Heart right ventricle (tissue), 16 donors: ENCODE measurements at regions of chr19 and their contacts with region 1.

Region 1: DNA sequence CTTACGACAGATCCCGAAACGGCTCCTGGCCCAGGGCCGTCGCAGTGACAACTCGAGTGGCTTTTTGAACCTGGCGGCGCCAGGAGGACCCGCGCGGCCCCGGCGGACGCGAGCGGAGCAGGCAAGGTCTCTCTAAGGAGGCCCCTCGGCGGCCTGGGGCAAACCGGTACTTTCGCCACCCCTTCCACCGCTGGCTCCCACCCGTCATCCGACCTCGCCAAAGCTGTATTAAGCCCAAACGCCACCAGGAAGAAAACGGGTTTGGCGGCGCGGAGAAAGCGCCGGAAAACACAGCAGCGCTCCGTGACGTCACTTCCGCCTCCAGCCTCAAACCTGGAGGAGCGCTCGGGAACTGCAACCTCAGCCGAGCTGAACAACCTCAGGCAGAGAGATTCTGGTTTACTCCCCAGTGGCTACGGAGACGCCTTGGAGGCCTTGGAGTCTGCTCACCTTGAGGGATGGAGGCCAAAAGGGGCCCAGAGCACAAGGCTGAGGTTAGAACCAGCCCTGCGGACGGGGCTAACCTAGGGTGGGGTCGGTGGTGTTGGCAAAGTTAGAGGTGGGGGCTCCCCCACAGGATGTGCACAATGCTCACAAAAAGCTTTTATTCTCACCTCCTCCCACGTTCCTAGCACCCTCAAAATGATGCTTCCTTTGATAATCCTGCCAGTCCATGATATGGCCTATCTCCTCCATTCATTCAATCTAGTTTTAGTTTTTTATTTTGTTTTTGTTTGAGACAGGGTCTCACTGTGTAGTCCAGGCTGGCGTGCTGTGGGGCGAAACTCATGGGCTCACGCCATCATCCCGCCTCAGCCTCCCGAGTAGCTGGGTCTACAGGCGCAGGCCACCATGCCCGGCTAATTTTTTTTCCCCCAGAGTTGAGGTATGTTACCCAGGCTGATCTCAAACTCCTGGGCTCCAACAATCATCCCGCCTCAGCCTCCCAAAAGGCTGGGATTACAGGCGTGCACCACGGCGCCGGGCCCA is at the start of gene ZNF266:
- DNase-seq: peak; percentile 89
- ATAC-seq: peak; percentile 90 to 98 (median 96)
- H3K4me3 ChIP-seq: peak within 1 kb of the TSS; percentile 60 to 94 (median 78)
- H3K27ac ChIP-seq: peak within 1 kb of the TSS; percentile 70 to 98 (median 90)
- H3K4me1 ChIP-seq: peaks cover 0 to 32% (median 17%) of the 10 kb centered on the region in 9 donors
- H3K27me3 ChIP-seq: no peaks in the 10 kb centered on the region
- CTCF ChIP-seq: peak; percentile 50 to 80 (median 62)
- total RNA-seq, gene ZNF266: 4.8 to 9.1 (median 7.8) TPM

Region 2: DNA sequence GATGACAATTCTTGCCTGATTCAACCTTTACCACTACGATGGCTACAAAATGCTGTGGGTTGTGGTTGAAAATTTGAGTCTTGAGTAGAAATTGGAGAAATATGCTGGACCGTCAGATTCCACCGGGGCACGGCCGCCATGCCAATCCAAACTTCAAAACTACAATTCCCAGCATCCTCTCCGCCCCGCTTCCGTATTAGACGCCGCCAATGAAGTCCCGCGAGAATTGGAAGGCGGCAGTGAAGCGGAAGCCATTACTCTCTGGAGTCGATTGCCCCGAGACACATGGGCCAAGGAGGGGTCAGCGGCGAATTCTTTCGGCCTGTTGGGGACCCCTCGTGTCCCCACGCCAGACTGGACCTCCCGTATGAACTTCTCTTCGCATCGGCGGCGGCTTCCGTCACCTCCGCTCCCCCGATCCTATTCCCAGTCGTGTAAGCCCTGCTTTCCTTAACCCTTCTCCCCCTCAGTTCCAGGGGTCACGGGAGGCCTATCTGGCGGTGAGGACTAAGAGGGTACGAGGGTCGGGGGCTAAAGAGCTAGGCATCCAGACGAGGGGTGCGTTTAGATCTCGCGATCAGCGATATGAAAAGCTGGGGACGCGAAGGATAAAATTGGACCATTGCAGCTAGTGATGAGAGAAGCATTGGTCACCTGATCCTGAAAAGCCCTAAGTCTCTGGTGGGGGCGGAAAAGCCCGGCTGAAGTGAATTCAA is 295.3 kb before region 1 on chr19 and contains the start of gene ZNF317:
- intact Hi-C with region 1: loop called in 2 of 10 experiments (anchors 10 kb)
- DNase-seq: peak; percentile 88 to 95
- ATAC-seq: peak; percentile 97 to 99 (median 98)
- H3K4me3 ChIP-seq: peak within 1 kb of the TSS; percentile 64 to 95 (median 84)
- H3K27ac ChIP-seq: peak within 1 kb of the TSS; percentile 59 to 94 (median 90)
- H3K4me1 ChIP-seq: peaks cover 0 to 30% (median 21%) of the 10 kb centered on the region in 9 donors
- H3K27me3 ChIP-seq: no peaks in the 10 kb centered on the region
- CTCF ChIP-seq: no peak
- total RNA-seq, gene ZNF317: 13.4 to 17.8 (median 15.7) TPM

Region 3: GRCh38 chr19:9309139-9309973 is 126.2 kb before region 1 on chr19 and contains the start of gene ZNF699:
- intact Hi-C with region 1: loop called in 3 of 10 experiments (anchors 5 to 10 kb)
- DNase-seq: peak; percentile 98 to 99
- ATAC-seq: peak; percentile 98 to 99 (median 99)
- H3K4me3 ChIP-seq: peak within 1 kb of the TSS; percentile 59 to 96 (median 82)
- H3K27ac ChIP-seq: peak within 1 kb of the TSS; percentile 92 to 98 (median 96)
- H3K4me1 ChIP-seq: peaks cover 0 to 26% (median 12%) of the 10 kb centered on the region in 9 donors
- H3K27me3 ChIP-seq: no peaks in the 10 kb centered on the region
- CTCF ChIP-seq: no peak
- total RNA-seq, gene ZNF699: 2.7 to 6.5 (median 4.2) TPM

Region 4: DNA sequence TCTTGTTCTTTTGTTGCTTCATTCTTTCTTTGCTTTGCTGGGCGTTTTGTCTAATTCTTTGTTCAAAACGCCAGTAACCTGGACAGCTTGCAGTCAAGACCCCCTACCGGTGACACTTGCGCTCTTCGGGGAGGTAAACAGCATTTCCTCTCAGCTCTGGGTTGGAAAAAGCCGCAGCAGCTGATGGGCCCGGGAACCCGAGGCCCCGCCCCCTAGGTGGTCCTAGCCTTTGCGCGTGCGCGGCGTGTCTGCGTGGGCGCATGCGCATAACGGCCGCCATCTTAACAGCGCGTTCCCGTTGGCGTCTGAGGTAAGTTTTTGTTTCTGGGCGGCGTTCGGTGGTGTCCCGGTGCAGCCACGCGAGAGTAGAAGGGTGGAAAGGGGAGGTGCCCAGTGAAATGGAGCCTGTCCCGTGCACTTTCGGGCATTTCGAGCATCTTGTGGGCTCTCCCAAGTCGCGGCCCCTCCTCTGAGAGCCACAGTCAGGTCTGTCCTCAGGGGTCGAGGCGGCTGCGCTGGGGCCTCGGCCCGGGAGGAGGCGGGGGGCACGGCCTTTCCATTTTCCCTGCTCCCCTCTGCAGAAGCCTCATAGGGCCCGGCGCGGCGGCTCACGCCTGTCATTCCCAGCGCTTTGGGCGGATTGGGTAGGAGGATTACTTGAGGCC is 111.5 kb before region 1 on chr19 and contains the start of gene ZNF559:
- intact Hi-C with region 1: loop called in 4 of 10 experiments (anchors 5 to 10 kb)
- DNase-seq: peak; percentile 93 to 96
- ATAC-seq: peak; percentile 96 to 99 (median 98)
- H3K4me3 ChIP-seq: peak within 1 kb of the TSS; percentile 57 to 92 (median 74)
- H3K27ac ChIP-seq: peak within 1 kb of the TSS; percentile 61 to 93 (median 90)
- H3K4me1 ChIP-seq: peaks cover 0 to 22% (median 6%) of the 10 kb centered on the region in 9 donors
- H3K27me3 ChIP-seq: no peaks in the 10 kb centered on the region
- CTCF ChIP-seq: peak in 7 of 9 donors; percentile 8 to 46 (median 26)
- total RNA-seq, gene ZNF559: 9.8 to 21.2 (median 17.5) TPM

Region 5: GRCh38 chr19:9498183-9498902 is 62.8 kb after region 1 on chr19 and contains the start of gene ZNF560:
- intact Hi-C with region 1: no loop called
- DNase-seq: no peak
- ATAC-seq: no peak
- H3K4me3 ChIP-seq: no peak within 1 kb of the TSS
- H3K27ac ChIP-seq: no peak within 1 kb of the TSS
- H3K4me1 ChIP-seq: no peaks in the 10 kb centered on the region
- H3K27me3 ChIP-seq: peaks cover 0 to 21% (median 4%) of the 10 kb centered on the region in 7 donors
- CTCF ChIP-seq: no peak
- total RNA-seq, gene ZNF560: 0.09 to 0.35 (median 0.13) TPM in 3 of 10 donors, not detected in the others

Region 6: GRCh38 chr19:9538183-9539058 is 102.8 kb after region 1 on chr19 and contains the start of gene ZNF426:
- intact Hi-C with region 1: loop called in 1 of 10 experiments (anchors 1 kb)
- DNase-seq: peak; percentile 87 to 90
- ATAC-seq: peak; percentile 97 to 99 (median 98)
- H3K4me3 ChIP-seq: peak within 1 kb of the TSS; percentile 59 to 97 (median 80)
- H3K27ac ChIP-seq: peak within 1 kb of the TSS; percentile 92 to 98 (median 95)
- H3K4me1 ChIP-seq: peaks cover 0 to 23% (median 16%) of the 10 kb centered on the region in 9 donors
- H3K27me3 ChIP-seq: no peaks in the 10 kb centered on the region
- CTCF ChIP-seq: peak in 1 of 9 donors; percentile 12
- total RNA-seq, gene ZNF426: 14.7 to 20.2 (median 17.0) TPM

Region 7: DNA sequence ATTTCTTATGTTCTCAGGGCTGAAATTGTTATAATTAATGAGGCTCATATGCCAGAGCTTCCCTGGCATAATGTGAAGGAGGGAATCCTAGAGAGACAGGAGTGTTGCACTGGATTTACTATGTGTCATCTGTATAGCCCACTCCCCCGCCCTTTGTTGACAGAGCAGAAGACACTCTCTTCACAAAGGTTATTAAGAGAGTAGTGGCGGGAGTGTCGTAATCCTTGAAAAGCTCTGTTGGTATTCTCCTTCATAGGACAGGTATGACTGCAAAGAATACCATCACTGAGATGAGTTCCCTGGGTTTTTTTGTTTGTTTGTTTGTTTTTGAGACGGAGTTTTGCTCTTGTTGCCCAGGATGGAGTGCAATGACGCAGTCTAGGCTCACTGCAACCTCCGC is 134.7 kb after region 1 on chr19:
- intact Hi-C with region 1: loop called in 1 of 10 experiments (anchors 10 kb)
- DNase-seq: no peak
- ATAC-seq: no peak
- H3K4me3 ChIP-seq: no peak overlapping the region
- H3K27ac ChIP-seq: no peak overlapping the region
- H3K4me1 ChIP-seq: peaks cover 0 to 6% (median 0%) of the 10 kb centered on the region in 9 donors
- H3K27me3 ChIP-seq: no peaks in the 10 kb centered on the region
- CTCF ChIP-seq: no peak

Region 8: GRCh38 chr19:9621156-9622037 is 185.8 kb after region 1 on chr19 and contains the start of gene ZNF561:
- intact Hi-C with region 1: loop called in 1 of 10 experiments (anchors 2 kb)
- DNase-seq: peak; percentile 87 to 89
- ATAC-seq: peak; percentile 93 to 97 (median 96)
- H3K4me3 ChIP-seq: peak within 1 kb of the TSS; percentile 41 to 97 (median 84)
- H3K27ac ChIP-seq: peak within 1 kb of the TSS; percentile 79 to 98 (median 94)
- H3K4me1 ChIP-seq: peaks cover 3 to 40% (median 23%) of the 10 kb centered on the region in 9 donors
- H3K27me3 ChIP-seq: no peaks in the 10 kb centered on the region
- CTCF ChIP-seq: no peak
- total RNA-seq, gene ZNF561: 19.1 to 26.6 (median 23.7) TPM